ENCODE measurements at regions of chr21 and their contacts with region 1.

Region 1: DNA sequence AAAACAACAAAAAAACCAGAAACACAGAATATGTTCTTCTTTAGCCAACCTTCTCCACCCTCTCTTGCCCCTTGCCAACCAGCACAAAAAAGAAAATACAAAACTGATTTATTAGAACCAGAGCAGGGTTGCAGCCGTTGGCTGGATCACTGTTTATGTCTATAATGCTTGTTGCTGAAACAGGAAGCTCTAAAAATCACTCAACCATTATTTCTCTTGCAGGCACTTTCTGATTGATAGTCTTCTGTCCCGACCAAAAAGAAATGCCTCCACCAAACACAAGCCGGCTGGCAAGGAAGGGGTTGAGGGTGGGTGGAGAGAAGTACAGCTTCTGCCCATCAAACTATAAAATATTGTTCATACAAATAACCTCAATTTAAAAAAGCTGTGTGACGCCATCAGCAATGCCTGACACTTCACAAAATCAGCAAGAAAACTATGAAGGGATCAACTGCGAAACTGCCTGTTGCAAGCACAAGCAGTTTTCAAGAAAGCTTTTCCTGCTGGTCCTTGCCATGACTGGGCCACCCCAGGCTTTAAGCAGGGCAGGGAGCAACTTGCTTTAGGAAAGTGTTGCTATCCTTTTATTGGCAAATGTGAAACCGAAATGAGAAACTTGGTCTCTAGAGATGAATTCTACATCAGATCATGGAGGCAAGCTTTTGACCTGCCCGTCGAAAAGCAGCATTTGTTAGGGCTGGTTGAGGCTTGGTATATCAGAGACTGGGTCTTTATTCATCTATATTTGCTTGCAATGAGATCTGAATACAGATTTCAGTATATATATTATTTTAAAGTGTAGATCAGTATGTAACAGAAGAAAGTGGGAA is 174.2 kb downstream of the RUNX1 start:
- DNase-seq: no peak
- ATAC-seq: no peak
- H3K4me3 ChIP-seq: no peak overlapping the region
- H3K27ac ChIP-seq: no peak overlapping the region
- H3K4me1 ChIP-seq: no peaks in the 10 kb centered on the region
- H3K27me3 ChIP-seq: no peaks in the 10 kb centered on the region
- CTCF ChIP-seq: no peak
- POLR2A ChIP-seq: no peak

Region 2: DNA sequence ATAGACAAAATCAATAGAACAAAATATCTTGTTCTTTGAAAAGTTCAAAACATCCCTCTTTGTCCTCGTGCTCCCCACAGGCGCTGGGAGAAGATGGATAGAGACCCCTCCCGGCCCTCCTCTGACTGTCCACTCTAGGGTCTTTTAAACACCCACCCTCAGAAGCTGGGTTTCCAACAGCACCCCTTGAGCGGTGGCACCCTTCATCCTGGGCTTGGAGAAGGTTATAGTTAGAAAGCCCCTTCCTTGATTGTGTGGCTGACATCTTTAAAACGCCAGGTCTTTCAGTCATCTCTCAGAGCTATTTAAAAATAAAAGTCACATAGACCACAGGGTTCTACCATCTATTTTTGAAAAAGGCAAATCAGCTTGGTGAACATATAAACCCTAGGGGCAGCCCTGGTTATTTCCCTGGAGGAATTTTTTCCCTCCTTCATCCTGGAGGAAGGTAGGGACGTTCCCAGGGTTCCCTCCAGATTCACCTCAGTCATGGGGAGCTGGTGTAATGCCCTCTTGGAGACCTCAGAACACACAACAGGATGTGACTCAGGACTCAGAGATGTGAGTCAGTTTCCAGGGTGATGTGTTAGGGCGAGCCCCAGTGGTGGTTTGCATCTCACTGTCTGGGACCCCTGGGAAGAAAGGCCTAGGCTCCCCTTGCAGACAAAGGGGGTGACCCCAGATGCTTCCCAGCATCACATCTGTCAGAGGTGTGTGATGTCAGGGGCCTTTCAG is 67.6 kb before region 1 on chr21:
- in situ Hi-C with region 1: loop called in 1 of 4 experiments (anchors 10 kb)
- intact Hi-C with region 1: no loop called
- DNase-seq: peak in 1 of 2 donors; percentile 53
- ATAC-seq: peak; percentile 34 to 58
- H3K4me3 ChIP-seq: no peak overlapping the region
- H3K27ac ChIP-seq: peak overlapping the region; percentile 44 to 81 (median 74)
- H3K4me1 ChIP-seq: peaks cover 7 to 31% of the 10 kb centered on the region in 2 donors
- H3K27me3 ChIP-seq: no peaks in the 10 kb centered on the region
- CTCF ChIP-seq: no peak
- POLR2A ChIP-seq: no peak

Measured in gastrocnemius medialis (tissue), 4 donors.